A549 (cell line): ENCODE measurements at regions of chr4 and their contacts with region 1.

Region 1: GRCh38 chr4:39527273-39528060 is at the start of gene UGDH:
- DNase-seq: peak; percentile 85 to 98
- ATAC-seq: peak; percentile 89 to 94
- H3K4me3 ChIP-seq: peak within 1 kb of the TSS; percentile 92
- H3K27ac ChIP-seq: peak within 1 kb of the TSS; percentile 96 to 99
- H3K4me1 ChIP-seq: peaks cover 5% of the 10 kb centered on the region; the same call in 1 of the 3 replicates
- CTCF ChIP-seq: 0 out of 3 replicates have a peak, but pooled peaks have one; percentile 6
- EP300 ChIP-seq: no peak
- POLR2A ChIP-seq: peak; percentile 98
- RAD21 ChIP-seq: peak in 1 of 2 experiments; percentile 18; a peak in 1 of 5 replicates
- polyA plus RNA-seq, gene UGDH: 417 and 610 TPM in 2 replicates

Region 2: GRCh38 chr4:39427520-39428114 is 99.8 kb before region 1 on chr4:
- CTCF ChIA-PET with region 1: no interaction called
- POLR2A ChIA-PET with region 1: no interaction called
- DNase-seq: no peak
- ATAC-seq: no peak
- H3K4me3 ChIP-seq: no peak overlapping the region
- H3K27ac ChIP-seq: no peak overlapping the region
- H3K4me1 ChIP-seq: no peaks in the 10 kb centered on the region
- CTCF ChIP-seq: no peak
- EP300 ChIP-seq: no peak
- POLR2A ChIP-seq: no peak
- RAD21 ChIP-seq: no peak

Region 3: DNA sequence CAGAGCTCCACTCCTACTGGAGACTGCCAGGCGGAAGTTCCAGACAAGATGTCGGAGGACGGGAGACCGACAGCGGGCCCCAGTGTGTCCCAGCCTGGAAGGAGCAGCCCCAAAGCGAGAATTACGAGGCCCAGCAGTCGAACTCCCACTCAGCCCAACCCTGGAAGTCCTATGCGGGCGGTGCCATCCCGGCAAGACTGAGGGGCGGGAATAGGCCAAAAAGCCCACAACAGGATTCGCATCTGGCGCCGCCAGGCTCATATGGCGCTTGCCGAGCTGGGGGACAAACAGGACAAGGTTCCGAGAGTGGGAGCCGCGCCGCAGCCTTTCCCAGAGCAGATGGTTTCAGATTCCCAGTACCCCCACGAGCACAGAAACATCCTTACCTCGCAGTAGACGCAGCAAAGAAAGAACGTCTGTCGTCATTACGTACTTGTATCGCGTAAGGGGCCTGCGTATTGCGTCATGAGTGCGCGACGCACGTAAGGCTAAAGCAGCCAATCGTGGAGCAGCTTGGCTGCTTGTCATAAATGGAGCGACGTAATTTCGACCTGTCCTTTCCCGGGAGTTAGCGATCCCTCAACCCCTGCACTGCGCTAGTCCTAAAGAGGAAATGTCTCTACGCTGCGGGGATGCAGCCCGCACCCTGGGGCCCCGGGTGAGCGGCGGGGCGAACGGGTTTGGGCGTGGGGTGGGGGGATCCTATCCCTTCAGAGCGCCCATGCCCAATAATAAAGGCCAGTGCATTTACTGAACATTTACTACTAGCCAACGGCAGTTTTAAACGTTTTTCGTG is 68.8 kb before region 1 on chr4 and contains the starts of genes LIAS and RPL9:
- CTCF ChIA-PET with region 1: no interaction called
- POLR2A ChIA-PET with region 1: interaction called, 16 read pairs
- DNase-seq: peak; percentile 95 to 99
- ATAC-seq: peak; percentile 95 to 96
- H3K4me3 ChIP-seq: peak within 1 kb of the TSS; percentile 82
- H3K27ac ChIP-seq: peak within 1 kb of the TSS; percentile 93 to 94
- H3K4me1 ChIP-seq: peaks cover 33% of the 10 kb centered on the region
- CTCF ChIP-seq: no peak
- EP300 ChIP-seq: no peak
- POLR2A ChIP-seq: peak; percentile 78
- RAD21 ChIP-seq: no peak
- polyA plus RNA-seq, gene LIAS: 16.0 and 22.3 TPM in 2 replicates
- polyA plus RNA-seq, gene RPL9: 897 and 1,263 TPM in 2 replicates

Region 4: DNA sequence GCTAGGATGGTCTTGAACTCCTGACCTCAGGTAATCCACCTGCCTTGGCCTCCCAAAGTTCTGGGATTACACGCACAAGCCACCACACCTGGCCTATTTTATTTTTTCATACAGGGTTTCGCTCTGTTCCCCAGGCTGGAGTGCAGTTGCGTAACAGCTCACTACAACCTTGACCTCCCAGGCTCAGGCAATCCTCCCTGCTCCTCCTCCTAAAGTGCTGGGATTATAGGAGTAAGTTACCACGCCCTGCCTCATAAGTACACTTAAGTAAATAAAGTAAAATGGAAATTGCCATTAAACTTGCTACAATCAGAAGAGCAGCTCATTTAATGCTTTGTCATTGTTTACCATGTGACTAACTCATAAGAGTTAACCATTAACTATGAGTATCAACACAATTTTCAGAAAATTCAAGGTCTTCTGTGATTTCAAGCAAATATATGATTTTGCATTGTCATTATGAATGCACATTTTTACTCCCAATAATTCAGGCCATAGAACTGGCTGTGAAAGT is 12.5 kb before region 1 on chr4:
- CTCF ChIA-PET with region 1: interaction called, 5 read pairs
- POLR2A ChIA-PET with region 1: interaction called, 35 read pairs
- DNase-seq: peak; percentile 57 to 96
- ATAC-seq: peak; percentile 81 to 93
- H3K4me3 ChIP-seq: peak overlapping the region; percentile 6; the same call in 1 of the 3 replicates
- H3K27ac ChIP-seq: peak overlapping the region; percentile 98 to 99
- H3K4me1 ChIP-seq: peaks cover 87% of the 10 kb centered on the region
- CTCF ChIP-seq: no peak
- EP300 ChIP-seq: peak; percentile 89 to 92
- POLR2A ChIP-seq: no peak
- RAD21 ChIP-seq: peak; percentile 8 to 36; a peak in 3 of 5 replicates

Region 5: DNA sequence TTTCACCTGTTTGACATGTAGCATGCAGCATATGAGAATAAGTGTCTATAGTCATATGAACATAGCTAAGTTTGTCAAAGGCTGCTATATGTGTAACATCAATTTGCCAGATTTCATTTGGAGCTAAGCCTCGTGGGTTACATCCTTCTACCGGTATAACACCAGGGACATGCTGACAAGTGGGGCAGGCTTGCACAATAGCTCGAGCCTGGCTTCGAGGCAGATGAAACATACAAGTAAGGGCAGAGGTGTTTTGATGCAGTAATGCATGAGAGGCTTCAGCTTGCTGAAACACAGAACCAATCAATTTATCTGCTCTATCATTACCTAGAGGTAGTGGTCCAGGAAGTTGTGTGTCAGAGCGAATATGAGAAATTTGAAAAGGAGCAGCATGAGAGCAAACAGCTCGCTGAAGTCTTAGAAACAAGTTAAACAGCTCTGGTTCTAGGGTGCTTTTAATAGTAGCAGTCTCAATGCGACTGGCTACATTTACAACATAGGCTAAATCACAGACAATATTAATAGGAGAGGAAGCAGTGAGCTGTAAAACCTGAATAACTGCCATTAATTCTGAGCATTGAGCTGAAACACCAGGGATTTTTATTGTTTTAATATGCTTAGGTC is 14.6 kb after region 1 on chr4:
- CTCF ChIA-PET with region 1: interaction called, 3 read pairs
- POLR2A ChIA-PET with region 1: interaction called, 24 read pairs
- DNase-seq: peak in 1 of 2 experiments; percentile 40
- ATAC-seq: peak in 1 of 2 experiments; percentile 16; a peak in 3 of 6 replicates
- H3K4me3 ChIP-seq: no peak overlapping the region
- H3K27ac ChIP-seq: peak overlapping the region; percentile 79 to 90
- H3K4me1 ChIP-seq: peaks cover 86% of the 10 kb centered on the region
- CTCF ChIP-seq: no peak
- EP300 ChIP-seq: no peak
- POLR2A ChIP-seq: no peak
- RAD21 ChIP-seq: no peak

Region 6: DNA sequence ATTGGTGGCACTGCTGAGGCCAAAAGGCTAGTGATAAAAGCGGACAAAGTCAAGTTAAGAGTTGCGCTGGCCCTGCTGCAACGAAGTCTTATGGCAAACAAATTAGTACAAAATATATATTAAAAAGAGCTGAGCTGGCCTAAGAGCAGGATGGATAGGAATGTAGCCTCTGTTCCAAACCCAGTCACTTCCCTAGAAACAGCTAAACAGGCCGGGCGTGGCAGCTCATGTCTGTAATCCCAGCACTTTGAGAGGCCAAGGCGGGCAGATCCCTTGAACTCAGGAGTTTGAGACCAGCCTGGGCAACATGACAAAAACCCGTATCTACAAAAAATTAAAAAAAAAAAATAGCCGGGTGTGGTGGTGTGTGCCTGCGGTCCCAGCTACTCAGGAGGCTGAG is 32.2 kb after region 1 on chr4:
- CTCF ChIA-PET with region 1: interaction called, 3 read pairs
- POLR2A ChIA-PET with region 1: interaction called, 16 read pairs
- DNase-seq: peak in 1 of 2 experiments; percentile 18
- ATAC-seq: peak in 1 of 2 experiments; percentile 44; a peak in 2 of 6 replicates
- H3K4me3 ChIP-seq: no peak overlapping the region
- H3K27ac ChIP-seq: peak overlapping the region in 1 of 2 experiments; percentile 75; a peak in 3 of 6 replicates
- H3K4me1 ChIP-seq: peaks cover 25% of the 10 kb centered on the region
- CTCF ChIP-seq: no peak
- EP300 ChIP-seq: no peak
- POLR2A ChIP-seq: no peak
- RAD21 ChIP-seq: no peak

Region 7: DNA sequence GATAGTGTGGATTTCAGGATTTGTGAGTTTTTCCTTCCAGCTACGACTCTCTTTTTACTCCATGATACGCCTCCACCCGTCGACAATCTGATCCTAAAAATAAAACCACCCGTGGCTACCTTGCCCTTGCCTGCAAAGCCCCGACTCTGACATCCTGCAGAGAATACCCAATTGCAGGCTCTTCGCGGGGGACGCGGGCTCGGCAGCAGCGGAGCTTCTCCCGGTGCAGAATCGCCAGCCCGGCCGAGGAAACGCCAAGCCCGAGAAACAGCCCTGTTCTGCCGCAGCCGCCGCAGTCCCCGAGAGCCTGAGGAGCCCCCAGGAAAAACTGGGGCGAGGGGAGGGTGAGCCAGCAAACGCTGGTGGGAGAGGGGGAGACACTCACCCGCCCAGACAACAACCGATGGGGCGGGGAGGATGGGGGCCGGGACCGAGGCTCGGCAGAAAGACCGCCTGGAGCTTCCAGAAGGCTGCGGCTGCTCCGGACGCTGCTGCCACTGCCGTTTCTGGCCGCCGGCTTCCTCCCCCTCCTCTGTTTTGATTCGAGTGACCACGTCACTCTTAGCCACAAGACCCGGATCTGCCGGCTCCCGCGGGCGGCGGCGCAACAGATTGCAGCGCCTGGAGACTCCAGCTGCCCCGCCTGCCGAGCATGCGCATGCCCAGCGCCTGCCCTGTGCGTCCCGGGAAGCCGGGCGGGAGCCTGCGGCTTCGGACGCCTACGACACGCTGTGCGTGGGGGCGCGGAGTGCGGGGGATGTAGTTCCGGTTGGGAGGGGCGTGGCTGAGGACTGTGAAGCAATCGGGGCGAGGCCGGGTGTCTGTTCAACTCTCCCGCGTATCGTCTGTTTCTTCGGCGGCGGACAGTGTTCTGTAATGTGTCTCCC is 111.1 kb after region 1 on chr4 and contains the start of gene SMIM14:
- CTCF ChIA-PET with region 1: no interaction called
- POLR2A ChIA-PET with region 1: interaction called, 38 read pairs
- DNase-seq: peak; percentile 89 to 97
- ATAC-seq: peak; percentile 91 to 93
- H3K4me3 ChIP-seq: peak within 1 kb of the TSS; percentile 85
- H3K27ac ChIP-seq: peak within 1 kb of the TSS; percentile 96 to 97
- H3K4me1 ChIP-seq: peaks cover 34% of the 10 kb centered on the region
- CTCF ChIP-seq: no peak
- EP300 ChIP-seq: no peak
- POLR2A ChIP-seq: peak; percentile 66
- RAD21 ChIP-seq: peak in 1 of 2 experiments; percentile 15; a peak in 1 of 5 replicates
- polyA plus RNA-seq, gene SMIM14: 81.3 and 109 TPM in 2 replicates